ENCODE measurements at regions of chr22 and their contacts with region 1.

Region 1: GRCh38 chr22:40922484-40923303 is 28.5 kb upstream of the RBX1 start:
- DNase-seq: peak; percentile 83
- H3K4me3 ChIP-seq: no peak overlapping the region
- H3K27ac ChIP-seq: peak overlapping the region; percentile 14
- H3K4me1 ChIP-seq: peaks cover 3% of the 10 kb centered on the region
- H3K27me3 ChIP-seq: no peaks in the 10 kb centered on the region
- CTCF ChIP-seq: peak; percentile 39 to 43
- POLR2A ChIP-seq: no peak

Region 2: GRCh38 chr22:40898850-40899357 is 23.8 kb before region 1 on chr22:
- CTCF ChIA-PET with region 1: interaction called, 12 read pairs
- POLR2A ChIA-PET with region 1: no interaction called
- dilution Hi-C with region 1: no loop called
- intact Hi-C with region 1: no loop called
- DNase-seq: peak; percentile 55
- H3K4me3 ChIP-seq: no peak overlapping the region
- H3K27ac ChIP-seq: no peak overlapping the region
- H3K4me1 ChIP-seq: no peaks in the 10 kb centered on the region
- H3K27me3 ChIP-seq: no peaks in the 10 kb centered on the region
- CTCF ChIP-seq: peak; percentile 33 to 44
- POLR2A ChIP-seq: no peak

Region 3: GRCh38 chr22:40950962-40951794 is 28.5 kb after region 1 on chr22 and contains the start of gene RBX1:
- CTCF ChIA-PET with region 1: interaction called, 39 read pairs
- POLR2A ChIA-PET with region 1: interaction called, 9 read pairs
- dilution Hi-C with region 1: no loop called
- intact Hi-C with region 1: no loop called
- DNase-seq: peak; percentile 97
- H3K4me3 ChIP-seq: peak within 1 kb of the TSS; percentile 84 to 100 (median 100)
- H3K27ac ChIP-seq: peak within 1 kb of the TSS; percentile 98
- H3K4me1 ChIP-seq: peaks cover 19% of the 10 kb centered on the region
- H3K27me3 ChIP-seq: no peaks in the 10 kb centered on the region
- CTCF ChIP-seq: no peak
- POLR2A ChIP-seq: peak; percentile 93
- total RNA-seq, gene RBX1: 74.7 and 77.7 TPM in 2 replicates

Region 4: GRCh38 chr22:41106122-41106968 is 183.7 kb after region 1 on chr22:
- CTCF ChIA-PET with region 1: interaction called, 18 read pairs
- POLR2A ChIA-PET with region 1: no interaction called
- dilution Hi-C with region 1: no loop called
- intact Hi-C with region 1: no loop called
- DNase-seq: no peak
- H3K4me3 ChIP-seq: no peak overlapping the region
- H3K27ac ChIP-seq: no peak overlapping the region
- H3K4me1 ChIP-seq: peaks cover 2% of the 10 kb centered on the region
- H3K27me3 ChIP-seq: no peaks in the 10 kb centered on the region
- CTCF ChIP-seq: no peak
- POLR2A ChIP-seq: no peak

Region 5: DNA sequence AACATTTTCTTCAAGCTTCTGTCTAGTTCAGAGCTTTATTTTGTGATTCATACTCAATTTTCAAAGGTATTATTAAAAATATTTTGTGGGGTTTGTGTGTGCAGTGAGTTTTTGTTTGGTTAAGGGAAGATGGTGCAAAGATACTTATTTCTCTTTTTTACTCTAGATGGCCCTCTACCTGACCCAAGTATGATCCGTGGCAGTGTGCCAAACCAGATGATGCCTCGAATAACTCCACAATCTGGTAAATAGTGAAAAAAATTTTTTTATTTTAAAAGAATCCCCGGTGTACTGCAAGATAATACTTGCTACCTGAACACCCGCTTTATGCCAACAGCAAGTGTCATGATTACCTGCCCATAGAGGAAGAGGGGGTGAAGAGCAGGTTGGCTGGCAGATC is 223.9 kb after region 1 on chr22:
- CTCF ChIA-PET with region 1: interaction called, 15 read pairs
- POLR2A ChIA-PET with region 1: no interaction called
- dilution Hi-C with region 1: no loop called
- intact Hi-C with region 1: no loop called
- DNase-seq: no peak
- H3K4me3 ChIP-seq: no peak overlapping the region
- H3K27ac ChIP-seq: no peak overlapping the region
- H3K4me1 ChIP-seq: no peaks in the 10 kb centered on the region
- H3K27me3 ChIP-seq: no peaks in the 10 kb centered on the region
- CTCF ChIP-seq: no peak
- POLR2A ChIP-seq: no peak

Region 6: GRCh38 chr22:41517172-41518047 is 594.7 kb after region 1 on chr22:
- CTCF ChIA-PET with region 1: interaction called, 14 read pairs
- POLR2A ChIA-PET with region 1: no interaction called
- dilution Hi-C with region 1: no loop called
- intact Hi-C with region 1: no loop called
- DNase-seq: peak; percentile 64
- H3K4me3 ChIP-seq: no peak overlapping the region
- H3K27ac ChIP-seq: no peak overlapping the region
- H3K4me1 ChIP-seq: peaks cover 3% of the 10 kb centered on the region
- H3K27me3 ChIP-seq: no peaks in the 10 kb centered on the region
- CTCF ChIP-seq: peak; percentile 80 to 89
- POLR2A ChIP-seq: no peak